ENCODE measurements at regions of chr1 and their contacts with region 1.

Region 1: DNA sequence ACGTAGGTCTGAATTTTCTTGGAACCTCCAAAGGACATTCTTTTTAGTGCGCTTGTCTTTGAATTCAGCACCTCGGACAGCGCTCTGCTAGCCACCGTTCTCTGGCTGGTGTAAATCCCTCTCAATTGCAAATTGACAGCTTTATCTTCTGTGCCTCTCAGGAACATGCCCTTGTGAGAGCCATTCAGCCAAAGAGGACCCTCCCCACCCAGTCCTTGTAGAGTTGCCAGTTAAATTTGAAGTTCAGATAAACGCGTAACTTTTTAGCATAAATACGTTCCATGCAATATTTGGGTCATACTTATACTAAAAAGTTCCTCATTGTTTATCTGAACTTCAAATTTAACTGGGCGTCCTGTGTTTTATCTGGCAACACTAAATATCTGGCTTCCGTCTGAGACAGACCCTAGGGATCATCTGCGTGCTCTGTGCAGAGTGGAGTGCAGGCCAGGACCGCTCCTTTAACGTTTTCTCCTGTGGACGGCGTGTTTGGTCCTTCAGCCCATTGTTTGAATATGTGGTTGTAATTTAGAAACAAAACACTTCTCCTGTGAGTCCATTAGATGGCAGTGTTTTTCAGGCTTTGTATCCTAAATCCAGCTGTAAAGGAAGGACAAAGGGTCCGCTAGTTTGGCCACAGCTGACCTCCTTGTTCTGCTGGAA is 7.0 kb downstream of the KCNAB2 start:
- DNase-seq: peak in 4 of 5 donors; percentile 63 to 74 (median 66)
- ATAC-seq: peak in 3 of 4 donors; percentile 43 to 68 (median 63)
- H3K4me3 ChIP-seq: no peak overlapping the region
- H3K27ac ChIP-seq: no peak overlapping the region
- H3K4me1 ChIP-seq: peaks cover 0 to 18% (median 11%) of the 10 kb centered on the region in 12 donors
- H3K27me3 ChIP-seq: no peaks in the 10 kb centered on the region
- CTCF ChIP-seq: peak; percentile 21 to 68 (median 50)
- POLR2A ChIP-seq: no peak

Region 2: GRCh38 chr1:6171548-6172119 is 119.0 kb after region 1 on chr1:
- intact Hi-C with region 1: loop called in 2 of 10 experiments (anchors 10 kb)
- DNase-seq: peak in 1 of 5 donors; percentile 35
- ATAC-seq: peak in 2 of 4 donors; percentile 21 to 45
- H3K4me3 ChIP-seq: no peak overlapping the region
- H3K27ac ChIP-seq: no peak overlapping the region
- H3K4me1 ChIP-seq: no peaks in the 10 kb centered on the region
- H3K27me3 ChIP-seq: peaks cover 0 to 35% (median 4%) of the 10 kb centered on the region in 9 donors
- CTCF ChIP-seq: peak in 4 of 12 donors; percentile 20 to 33 (median 24)
- POLR2A ChIP-seq: no peak

Region 3: GRCh38 chr1:6180212-6180575 is 127.5 kb after region 1 on chr1 and contains the start of gene CHD5:
- intact Hi-C with region 1: loop called in 6 of 10 experiments (anchors 5 to 10 kb)
- DNase-seq: no peak
- ATAC-seq: peak in 1 of 4 donors; percentile 7
- H3K4me3 ChIP-seq: peak within 1 kb of the TSS in 10 of 12 donors; percentile 16 to 44 (median 34)
- H3K27ac ChIP-seq: no peak within 1 kb of the TSS
- H3K4me1 ChIP-seq: peaks cover 5 to 30% (median 14%) of the 10 kb centered on the region in 12 donors
- H3K27me3 ChIP-seq: peaks cover 17 to 52% (median 34%) of the 10 kb centered on the region in 9 donors
- CTCF ChIP-seq: peak in 5 of 12 donors; percentile 6 to 30 (median 13)
- POLR2A ChIP-seq: no peak
- total RNA-seq, gene CHD5: 0.07 to 1.3 (median 0.32) TPM in 7 of 9 donors, not detected in the others

Region 4: GRCh38 chr1:6185635-6186382 is 133.1 kb after region 1 on chr1:
- intact Hi-C with region 1: loop called in 4 of 10 experiments (anchors 5 kb)
- DNase-seq: no peak
- ATAC-seq: no peak
- H3K4me3 ChIP-seq: no peak overlapping the region
- H3K27ac ChIP-seq: no peak overlapping the region
- H3K4me1 ChIP-seq: peaks cover 0 to 8% (median 5%) of the 10 kb centered on the region in 12 donors
- H3K27me3 ChIP-seq: peaks cover 0 to 7% (median 0%) of the 10 kb centered on the region in 9 donors
- CTCF ChIP-seq: peak in 10 of 12 donors; percentile 11 to 55 (median 42)
- POLR2A ChIP-seq: no peak

Region 5: DNA sequence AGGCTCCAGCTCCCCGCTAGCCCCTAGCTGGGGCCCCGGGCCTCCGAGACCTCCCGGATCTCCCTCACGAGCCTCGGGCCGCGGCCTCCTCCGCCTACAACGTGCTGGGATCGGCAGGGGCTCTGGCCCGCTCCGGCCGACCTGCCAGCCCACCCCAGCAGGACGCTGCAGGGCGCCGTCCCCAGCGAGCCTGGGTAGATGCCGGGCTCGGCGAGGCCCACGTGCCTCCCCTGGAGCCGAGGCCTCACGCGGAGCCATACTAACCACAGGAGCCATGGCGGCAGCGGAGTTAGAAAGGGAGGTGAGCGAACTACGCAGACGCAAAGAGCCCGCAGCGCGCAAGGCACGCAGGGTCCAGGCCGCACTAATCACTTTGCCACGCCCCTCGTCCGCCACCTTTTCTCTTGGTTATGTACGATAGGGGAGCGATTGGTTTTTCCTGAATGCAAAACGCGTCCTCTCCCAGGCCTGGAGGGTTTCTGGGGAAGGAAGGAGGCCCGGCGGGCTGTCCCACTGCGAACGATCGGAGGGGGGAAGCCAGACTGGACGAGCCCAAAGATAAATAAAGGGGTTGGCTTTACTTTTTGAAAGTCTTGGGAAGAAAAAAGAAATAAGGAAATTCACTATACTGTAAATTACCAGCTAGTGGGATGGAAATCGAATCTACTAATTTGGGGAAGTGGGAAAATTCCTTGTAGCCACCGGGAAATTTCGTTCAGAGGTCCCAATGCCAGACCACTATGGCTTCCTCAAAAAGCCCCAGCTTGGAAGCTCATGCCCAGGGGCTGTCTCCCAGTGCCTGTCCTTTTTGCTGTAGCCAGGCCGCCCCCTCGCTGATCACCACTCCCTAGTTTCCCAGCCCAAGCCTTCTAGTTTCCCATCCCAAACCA is 146.9 kb after region 1 on chr1 and contains the start of gene RPL22:
- intact Hi-C with region 1: loop called in 2 of 10 experiments (anchors 2 to 10 kb)
- DNase-seq: peak; percentile 98 to 99 (median 98)
- ATAC-seq: peak; percentile 97 to 99 (median 98)
- H3K4me3 ChIP-seq: peak within 1 kb of the TSS; percentile 77 to 100 (median 89)
- H3K27ac ChIP-seq: peak within 1 kb of the TSS; percentile 66 to 93 (median 84)
- H3K4me1 ChIP-seq: peaks cover 8 to 31% (median 21%) of the 10 kb centered on the region in 12 donors
- H3K27me3 ChIP-seq: no peaks in the 10 kb centered on the region
- CTCF ChIP-seq: peak in 1 of 12 donors; percentile 10
- POLR2A ChIP-seq: peak in 1 of 2 donors; percentile 78
- total RNA-seq, gene RPL22: 63.6 to 343 (median 241) TPM

Region 6: GRCh38 chr1:6235296-6235677 is 182.6 kb after region 1 on chr1:
- intact Hi-C with region 1: loop called in 1 of 10 experiments (anchors 5 kb)
- DNase-seq: no peak
- ATAC-seq: peak in 2 of 4 donors; percentile 2 to 4
- H3K4me3 ChIP-seq: peak overlapping the region; percentile 51 to 95 (median 77)
- H3K27ac ChIP-seq: peak overlapping the region in 11 of 12 donors; percentile 25 to 85 (median 75)
- H3K4me1 ChIP-seq: peaks cover 0 to 38% (median 21%) of the 10 kb centered on the region in 12 donors
- H3K27me3 ChIP-seq: peaks cover 0 to 13% (median 5%) of the 10 kb centered on the region in 9 donors
- CTCF ChIP-seq: no peak
- POLR2A ChIP-seq: no peak

Region 7: GRCh38 chr1:6343506-6344405 is 291.1 kb after region 1 on chr1:
- intact Hi-C with region 1: loop called in 3 of 10 experiments (anchors 10 kb)
- DNase-seq: peak; percentile 52 to 76 (median 67)
- ATAC-seq: peak; percentile 72 to 85 (median 82)
- H3K4me3 ChIP-seq: no peak overlapping the region
- H3K27ac ChIP-seq: no peak overlapping the region
- H3K4me1 ChIP-seq: peaks cover 0 to 14% (median 5%) of the 10 kb centered on the region in 12 donors
- H3K27me3 ChIP-seq: no peaks in the 10 kb centered on the region
- CTCF ChIP-seq: peak; percentile 76 to 89 (median 82)
- POLR2A ChIP-seq: no peak

Measured in heart left ventricle (tissue), 16 donors.